SK-N-SH (cell line): ENCODE measurements at regions of chr5 and their contacts with region 1.

Region 1: GRCh38 chr5:127492854-127493738 is 24.3 kb upstream of the PRRC1 start:
- DNase-seq: peak; percentile 42
- H3K4me3 ChIP-seq: no peak overlapping the region; a peak in 1 of 4 replicates
- H3K27ac ChIP-seq: no peak overlapping the region
- H3K4me1 ChIP-seq: no peaks in the 10 kb centered on the region
- H3K27me3 ChIP-seq: peaks cover 5% of the 10 kb centered on the region; the same call in 1 of the 2 replicates
- CTCF ChIP-seq: peak; percentile 99
- EP300 ChIP-seq: no peak
- RAD21 ChIP-seq: peak; percentile 49

Region 2: DNA sequence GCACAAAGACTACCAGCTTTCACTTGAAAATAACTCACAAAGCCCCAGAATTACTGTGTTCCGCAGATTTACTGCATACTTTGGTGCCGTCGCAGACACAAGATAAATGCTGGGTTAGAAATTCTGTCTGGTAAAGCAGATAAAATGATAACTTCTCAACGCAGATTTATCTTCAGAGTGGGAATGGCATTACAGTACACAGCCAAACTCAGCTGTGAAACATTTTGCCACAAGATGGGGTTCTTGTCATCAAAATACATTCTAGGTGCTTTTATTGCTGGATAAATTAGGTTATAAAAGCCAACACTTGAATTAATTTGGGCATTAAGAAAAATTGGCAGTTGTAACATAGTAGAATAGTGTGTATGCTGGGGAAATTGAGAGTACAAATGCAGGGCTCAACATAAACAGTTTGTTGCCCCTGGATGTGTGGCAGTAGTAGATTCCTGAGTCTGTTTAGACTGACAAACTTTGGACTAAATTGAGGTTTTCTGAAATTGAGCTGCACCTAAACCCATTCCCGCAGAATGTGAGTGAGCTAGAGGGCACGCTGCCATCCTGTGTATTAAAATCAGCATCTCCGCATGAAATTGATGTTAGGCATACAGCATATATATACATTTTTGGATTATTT is 655.1 kb before region 1 on chr5:
- CTCF ChIA-PET with region 1: interaction called, 21 read pairs
- POLR2A ChIA-PET with region 1: no interaction called
- DNase-seq: no peak
- H3K4me3 ChIP-seq: no peak overlapping the region
- H3K27ac ChIP-seq: peak overlapping the region in 1 of 2 experiments; percentile 17; a peak in 1 of 4 replicates
- H3K4me1 ChIP-seq: no peaks in the 10 kb centered on the region; a peak in 2 of 4 replicates
- H3K27me3 ChIP-seq: no peaks in the 10 kb centered on the region
- CTCF ChIP-seq: peak; percentile 61
- EP300 ChIP-seq: no peak
- RAD21 ChIP-seq: peak; percentile 76

Region 3: GRCh38 chr5:127305493-127305892 is 187.6 kb before region 1 on chr5:
- CTCF ChIA-PET with region 1: interaction called, 22 read pairs
- POLR2A ChIA-PET with region 1: no interaction called
- DNase-seq: no peak
- H3K4me3 ChIP-seq: no peak overlapping the region
- H3K27ac ChIP-seq: no peak overlapping the region
- H3K4me1 ChIP-seq: no peaks in the 10 kb centered on the region
- H3K27me3 ChIP-seq: no peaks in the 10 kb centered on the region
- CTCF ChIP-seq: no peak
- EP300 ChIP-seq: no peak
- RAD21 ChIP-seq: no peak

Region 4: DNA sequence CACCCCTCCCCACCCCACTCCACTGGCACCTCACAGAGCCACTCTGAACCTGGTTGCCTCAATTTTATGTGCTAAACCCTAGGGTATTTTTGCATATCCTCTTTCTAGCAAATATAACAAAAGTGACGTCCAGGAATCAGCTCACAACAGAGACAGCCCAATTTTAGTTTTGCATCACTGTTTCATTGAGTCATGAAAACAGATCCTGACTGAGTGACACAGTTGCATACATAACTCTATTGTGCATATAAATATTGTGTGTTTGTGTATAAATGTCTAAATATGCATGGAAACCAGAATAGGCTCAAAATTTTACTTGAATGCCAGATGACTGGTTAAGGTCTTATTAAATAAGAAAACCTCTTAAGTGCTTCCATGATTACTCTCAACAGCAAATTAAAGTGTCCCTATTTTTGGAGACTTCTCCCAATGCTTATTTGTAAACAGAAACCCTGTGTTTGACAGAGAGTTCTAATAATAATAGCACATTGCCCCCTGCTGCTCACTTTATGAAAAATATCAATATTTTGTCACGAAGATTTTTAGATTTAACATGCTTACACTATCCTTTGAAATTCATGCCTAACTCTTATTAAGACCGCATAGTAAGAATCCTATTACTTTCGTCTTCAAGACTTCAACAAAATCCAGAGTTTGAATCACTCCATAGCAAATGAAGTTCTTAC is 51.2 kb before region 1 on chr5:
- CTCF ChIA-PET with region 1: interaction called, 16 read pairs
- POLR2A ChIA-PET with region 1: no interaction called
- DNase-seq: peak; percentile 32
- H3K4me3 ChIP-seq: no peak overlapping the region
- H3K27ac ChIP-seq: no peak overlapping the region
- H3K4me1 ChIP-seq: no peaks in the 10 kb centered on the region; a peak in 4 of 4 replicates
- H3K27me3 ChIP-seq: no peaks in the 10 kb centered on the region
- CTCF ChIP-seq: peak; percentile 70
- EP300 ChIP-seq: no peak
- RAD21 ChIP-seq: peak; percentile 75

Region 5: DNA sequence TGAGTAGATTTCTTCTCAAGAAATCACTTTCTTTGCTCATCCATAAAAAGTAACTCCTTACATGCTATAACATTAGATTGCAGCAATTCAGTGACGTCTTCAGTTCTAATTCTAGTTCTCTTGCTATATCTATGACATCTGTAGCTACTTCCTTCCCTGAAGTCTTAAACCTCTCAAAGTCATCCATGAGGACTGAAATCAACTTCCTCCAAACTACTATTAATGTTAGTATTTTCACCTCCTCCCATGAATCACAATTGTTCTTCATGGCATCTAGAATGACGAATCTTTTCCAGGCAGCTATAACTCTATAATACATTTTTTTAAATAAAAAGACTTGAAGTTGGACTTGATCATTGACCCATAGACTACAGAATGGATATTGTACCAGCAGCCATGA is 21.9 kb before region 1 on chr5:
- CTCF ChIA-PET with region 1: interaction called, 16 read pairs
- POLR2A ChIA-PET with region 1: no interaction called
- DNase-seq: no peak
- H3K4me3 ChIP-seq: no peak overlapping the region
- H3K27ac ChIP-seq: no peak overlapping the region
- H3K4me1 ChIP-seq: no peaks in the 10 kb centered on the region
- H3K27me3 ChIP-seq: no peaks in the 10 kb centered on the region
- CTCF ChIP-seq: no peak
- EP300 ChIP-seq: no peak
- RAD21 ChIP-seq: no peak

Region 6: DNA sequence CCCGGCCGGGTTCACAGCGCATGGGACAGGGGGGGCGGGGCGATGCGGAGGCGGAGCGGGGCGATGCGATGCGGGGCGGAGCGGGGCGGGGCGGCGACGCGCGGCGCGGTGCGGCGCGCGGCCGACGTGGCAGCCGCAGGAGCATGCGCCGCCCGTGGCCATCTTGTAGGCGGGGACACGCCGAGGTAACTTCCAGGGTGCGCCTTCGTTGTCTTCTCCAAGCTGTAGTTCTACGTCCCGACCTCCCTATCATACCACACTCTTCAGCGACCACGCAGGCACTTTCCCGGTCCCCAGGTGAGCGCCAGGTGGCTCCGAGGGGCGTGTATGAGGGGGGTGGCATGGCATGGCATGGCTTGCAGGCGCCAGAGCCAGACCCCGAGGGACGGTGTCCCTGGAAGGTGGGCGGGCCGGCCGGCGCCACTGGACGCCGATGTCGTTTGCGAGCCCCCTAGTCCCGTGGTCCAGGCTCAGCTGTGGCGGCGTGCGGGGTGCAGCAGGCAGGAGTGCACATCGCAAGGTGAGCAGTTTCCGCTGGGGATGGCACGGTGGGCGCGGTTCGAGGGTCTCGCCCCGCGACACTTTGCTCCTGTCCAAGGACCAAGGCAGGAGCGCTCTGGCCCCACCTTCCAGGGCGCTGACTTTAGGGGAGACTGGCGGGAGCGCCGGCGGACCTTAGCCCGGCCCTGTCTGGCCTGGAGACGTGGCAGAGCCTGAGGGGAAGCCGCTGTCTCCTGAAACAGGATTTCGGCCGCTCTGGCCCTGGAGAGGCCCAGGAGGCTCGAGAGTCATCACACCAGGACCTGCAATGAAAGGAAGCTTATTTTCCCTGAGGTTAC is 24.6 kb after region 1 on chr5 and contains the start of gene PRRC1:
- CTCF ChIA-PET with region 1: interaction called, 16 read pairs
- POLR2A ChIA-PET with region 1: no interaction called
- DNase-seq: peak; percentile 94
- H3K4me3 ChIP-seq: peak within 1 kb of the TSS; percentile 86 to 97
- H3K27ac ChIP-seq: peak within 1 kb of the TSS; percentile 88 to 89
- H3K4me1 ChIP-seq: peaks cover 4 to 9% of the 10 kb centered on the region in 2 experiments; a peak in 3 of 4 replicates
- H3K27me3 ChIP-seq: no peaks in the 10 kb centered on the region
- CTCF ChIP-seq: no peak
- EP300 ChIP-seq: no peak
- RAD21 ChIP-seq: no peak
- polyA plus RNA-seq, gene PRRC1: 26.6 and 34.2 TPM in 2 replicates